ENCODE measurements at regions of chr9 and their contacts with region 1.

Region 1: GRCh38 chr9:69035438-69036308 is at the start of gene FXN:
- DNase-seq: peak; percentile 56
- ATAC-seq: peak; percentile 96
- H3K4me3 ChIP-seq: peak within 1 kb of the TSS; percentile 87 to 90
- H3K27ac ChIP-seq: peak within 1 kb of the TSS; percentile 72
- H3K4me1 ChIP-seq: peaks cover 0 to 11% of the 10 kb centered on the region in 2 experiments; a peak in 2 of 4 replicates
- H3K27me3 ChIP-seq: no peaks in the 10 kb centered on the region
- CTCF ChIP-seq: peak; percentile 82 to 95 (median 93)
- POLR2A ChIP-seq: peak; percentile 61
- RAD21 ChIP-seq: peak; percentile 71
- total RNA-seq, gene FXN: 24.1 TPM

Region 2: DNA sequence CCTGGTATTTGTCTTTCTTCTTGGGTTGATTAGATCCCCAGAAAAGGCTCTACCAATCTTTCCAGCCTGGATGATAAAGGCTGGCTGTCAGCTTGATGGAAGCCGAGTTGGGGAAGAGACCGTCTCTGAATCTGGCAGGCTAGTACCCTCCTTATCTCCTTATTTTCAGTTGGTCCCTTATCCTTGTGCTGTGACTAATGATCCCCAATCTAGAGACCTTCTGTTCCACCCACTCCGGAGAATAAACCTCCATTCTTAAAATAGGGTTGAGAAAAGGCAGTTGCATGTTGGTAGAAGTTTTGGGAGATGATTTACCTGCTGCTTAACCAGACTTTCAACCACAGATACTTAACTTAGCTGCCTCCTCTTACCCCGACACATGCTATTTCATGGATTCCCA is 74.1 kb before region 1 on chr9:
- CTCF ChIA-PET with region 1: no interaction called
- POLR2A ChIA-PET with region 1: no interaction called
- RAD21 ChIA-PET with region 1: no interaction called
- intact Hi-C with region 1: no loop called
- DNase-seq: no peak
- ATAC-seq: no peak
- H3K4me3 ChIP-seq: no peak overlapping the region
- H3K27ac ChIP-seq: no peak overlapping the region
- H3K4me1 ChIP-seq: no peaks in the 10 kb centered on the region
- H3K27me3 ChIP-seq: peaks cover 18% of the 10 kb centered on the region; the same call in 1 of the 2 replicates
- CTCF ChIP-seq: no peak
- POLR2A ChIP-seq: no peak
- RAD21 ChIP-seq: no peak

Region 3: DNA sequence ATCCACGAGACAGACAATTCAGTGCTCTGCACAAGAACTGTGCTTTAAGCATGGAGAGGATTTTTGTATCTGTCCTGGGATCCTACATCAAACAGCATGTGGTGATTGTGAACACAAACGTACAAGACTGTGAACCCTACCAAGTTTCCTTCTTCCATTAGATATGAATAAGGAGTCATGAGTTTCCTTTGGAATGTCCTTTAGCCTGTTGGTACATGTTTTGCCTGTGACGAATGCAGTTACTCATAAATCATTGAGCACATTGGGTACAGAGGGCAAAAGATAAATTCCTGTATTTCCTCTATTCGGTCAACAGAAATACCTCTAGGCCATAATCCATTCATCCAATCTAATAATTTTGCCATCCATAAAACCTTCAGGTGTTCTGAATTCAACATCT is 61.4 kb after region 1 on chr9:
- CTCF ChIA-PET with region 1: no interaction called
- POLR2A ChIA-PET with region 1: no interaction called
- RAD21 ChIA-PET with region 1: no interaction called
- intact Hi-C with region 1: no loop called
- DNase-seq: no peak
- ATAC-seq: no peak
- H3K4me3 ChIP-seq: no peak overlapping the region
- H3K27ac ChIP-seq: no peak overlapping the region
- H3K4me1 ChIP-seq: peaks cover 0 to 6% of the 10 kb centered on the region in 2 experiments; a peak in 1 of 4 replicates
- H3K27me3 ChIP-seq: no peaks in the 10 kb centered on the region
- CTCF ChIP-seq: no peak
- POLR2A ChIP-seq: no peak
- RAD21 ChIP-seq: no peak

Region 4: GRCh38 chr9:69121828-69122548 is 86.3 kb after region 1 on chr9:
- CTCF ChIA-PET with region 1: no interaction called
- POLR2A ChIA-PET with region 1: no interaction called
- RAD21 ChIA-PET with region 1: no interaction called
- intact Hi-C with region 1: loop called (anchors 10 kb)
- DNase-seq: no peak
- ATAC-seq: peak; percentile 36
- H3K4me3 ChIP-seq: peak overlapping the region; percentile 75 to 85
- H3K27ac ChIP-seq: peak overlapping the region; percentile 100
- H3K4me1 ChIP-seq: peaks cover 22 to 47% of the 10 kb centered on the region in 2 experiments
- H3K27me3 ChIP-seq: no peaks in the 10 kb centered on the region
- CTCF ChIP-seq: no peak
- POLR2A ChIP-seq: no peak
- RAD21 ChIP-seq: 0 out of 2 replicates have a peak, but pooled peaks have one; percentile 1

Region 5: DNA sequence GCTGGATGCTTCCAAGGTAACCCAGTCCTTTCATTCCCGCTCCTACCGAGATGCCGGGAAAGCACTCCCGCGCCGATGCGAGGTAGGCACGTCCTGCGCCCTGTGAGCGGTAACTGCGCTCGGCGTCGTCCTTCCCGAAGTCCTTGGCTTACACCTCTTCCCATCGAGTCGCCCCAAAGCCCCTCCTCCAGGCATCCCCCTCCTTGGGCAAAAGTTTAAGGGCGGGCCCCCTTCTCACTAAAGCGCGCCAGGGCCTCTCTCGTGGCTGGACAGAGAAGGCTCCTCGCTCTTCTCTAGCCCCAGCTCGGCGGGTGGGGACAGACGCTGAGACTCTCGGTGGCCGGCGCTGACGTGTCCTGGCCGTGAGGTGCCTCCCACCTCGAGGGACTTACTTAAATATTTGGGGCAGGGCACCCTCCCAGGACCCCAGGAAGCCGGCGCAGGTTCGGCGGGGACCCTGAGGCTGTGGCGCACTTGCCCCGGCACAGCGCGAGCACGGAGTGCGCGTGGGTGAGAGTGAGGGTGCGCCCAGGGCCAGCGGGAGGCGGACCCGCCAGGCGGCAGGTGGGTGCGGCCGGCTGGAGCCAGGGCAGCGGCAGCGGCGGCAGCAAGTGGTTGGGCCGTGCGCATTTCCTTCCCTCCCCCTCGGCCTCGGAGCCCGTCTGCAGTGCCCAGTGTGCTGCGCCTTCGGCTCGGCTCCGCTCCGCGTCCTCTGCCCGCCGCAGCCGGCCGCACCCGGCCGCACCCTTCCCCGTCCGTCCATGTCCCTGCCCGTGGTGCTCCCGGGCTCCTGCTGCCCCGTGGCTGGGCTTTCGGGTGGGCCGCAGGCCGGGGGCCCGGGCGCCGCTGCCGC is 289.1 kb after region 1 on chr9 and contains the start of gene ENTREP1:
- CTCF ChIA-PET with region 1: no interaction called
- POLR2A ChIA-PET with region 1: no interaction called
- RAD21 ChIA-PET with region 1: no interaction called
- intact Hi-C with region 1: loop called (anchors 10 kb)
- DNase-seq: peak; percentile 24
- ATAC-seq: peak; percentile 95
- H3K4me3 ChIP-seq: peak within 1 kb of the TSS; percentile 40 to 62
- H3K27ac ChIP-seq: no peak within 1 kb of the TSS
- H3K4me1 ChIP-seq: peaks cover 4 to 7% of the 10 kb centered on the region in 2 experiments; a peak in 3 of 4 replicates
- H3K27me3 ChIP-seq: peaks cover 26% of the 10 kb centered on the region
- CTCF ChIP-seq: no peak
- POLR2A ChIP-seq: no peak
- RAD21 ChIP-seq: no peak
- total RNA-seq, gene ENTREP1: 1.1 TPM